Activated B cell treated with CpG ODN at 0.5 μM for 24 hours (primary cell): ENCODE measurements at regions of chr5 and their contacts with region 1.

Region 1: DNA sequence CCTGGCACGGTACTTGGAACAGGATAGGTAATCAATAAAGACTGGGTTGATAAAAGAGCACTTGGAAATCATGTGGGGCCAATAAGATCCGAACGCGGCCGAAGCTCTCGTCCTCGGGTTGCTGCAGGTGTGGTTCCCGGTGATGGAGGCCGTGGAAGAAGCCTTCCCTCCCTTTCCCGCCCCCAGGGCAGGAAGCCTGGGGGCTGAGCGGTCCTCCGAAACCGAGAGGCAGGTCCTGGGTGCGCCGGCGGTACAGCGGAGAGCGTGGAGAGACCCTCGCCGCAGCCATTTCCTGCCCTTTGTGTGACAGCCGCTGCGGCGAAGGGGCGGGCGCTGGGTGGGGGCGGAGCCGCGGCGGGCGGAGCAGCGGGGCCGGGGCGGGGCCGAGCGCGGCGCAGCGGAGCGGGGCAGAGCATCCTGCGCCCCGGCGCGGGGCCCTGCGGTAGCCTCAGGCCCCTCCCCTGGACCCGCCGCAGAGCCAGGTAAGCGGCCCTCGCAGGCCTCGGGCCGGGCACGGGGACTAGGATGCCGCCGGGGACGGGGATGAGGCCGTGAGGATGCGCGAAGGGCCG is at the start of gene CYFIP2:
- DNase-seq: peak; percentile 76
- ATAC-seq: peak; percentile 90
- H3K4me3 Mint-ChIP-seq: peak within 1 kb of the TSS; percentile 97
- H3K27ac Mint-ChIP-seq: peak within 1 kb of the TSS; percentile 99
- H3K4me1 Mint-ChIP-seq: peaks cover 69% of the 10 kb centered on the region
- H3K27me3 Mint-ChIP-seq: no peaks in the 10 kb centered on the region
- CTCF ChIP-seq: no peak
- total RNA-seq, gene CYFIP2: 385 and 471 TPM in 2 replicates

Region 2: GRCh38 chr5:157283434-157283833 is 17.6 kb after region 1 on chr5:
- CTCF ChIA-PET with region 1: interaction called, 4 read pairs
- POLR2A ChIA-PET with region 1: interaction called, 73 read pairs
- intact Hi-C with region 1: loop called (anchors 1 kb)
- DNase-seq: peak; percentile 40
- ATAC-seq: peak; percentile 99
- H3K4me3 Mint-ChIP-seq: peak overlapping the region; percentile 52
- H3K27ac Mint-ChIP-seq: peak overlapping the region; percentile 89
- H3K4me1 Mint-ChIP-seq: peaks cover 70% of the 10 kb centered on the region
- H3K27me3 Mint-ChIP-seq: no peaks in the 10 kb centered on the region
- CTCF ChIP-seq: no peak

Region 3: DNA sequence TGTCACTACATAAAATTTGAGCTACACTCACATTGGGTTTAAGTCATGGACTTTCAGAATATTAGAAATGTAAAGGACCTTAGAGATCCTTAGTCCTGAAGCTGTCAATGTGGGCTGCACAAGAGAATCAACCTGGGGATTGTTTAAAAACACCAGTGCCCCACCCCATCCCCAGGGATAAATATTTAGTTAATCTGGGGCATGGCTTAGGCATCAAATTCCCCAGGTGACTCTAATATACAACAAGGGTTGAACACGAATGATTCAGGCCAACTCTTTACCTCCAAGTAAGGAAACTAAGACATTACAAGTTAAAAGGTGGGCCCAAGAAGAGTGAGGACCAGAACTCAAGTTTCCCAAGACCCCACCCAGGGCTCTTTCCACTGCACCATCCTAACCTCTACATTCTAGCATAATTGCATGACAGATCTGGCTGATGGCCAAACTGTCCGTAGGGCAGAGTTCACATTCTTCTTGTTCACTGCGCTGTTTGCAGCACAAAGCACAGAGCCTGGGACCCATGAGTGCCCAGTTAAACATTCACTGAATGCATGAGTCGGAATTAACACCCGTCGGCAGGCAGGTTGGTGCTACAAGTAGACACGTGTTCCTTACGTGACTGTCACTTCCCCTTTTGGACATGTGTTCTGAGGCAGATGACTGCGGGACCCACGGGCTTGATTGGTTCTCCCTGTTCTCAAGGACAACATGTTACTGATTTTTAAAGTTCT is 25.3 kb after region 1 on chr5:
- CTCF ChIA-PET with region 1: no interaction called
- POLR2A ChIA-PET with region 1: interaction called, 73 read pairs
- intact Hi-C with region 1: loop called (anchors 1 kb)
- DNase-seq: no peak
- ATAC-seq: peak; percentile 94
- H3K4me3 Mint-ChIP-seq: no peak overlapping the region
- H3K27ac Mint-ChIP-seq: peak overlapping the region; percentile 89
- H3K4me1 Mint-ChIP-seq: peaks cover 48% of the 10 kb centered on the region
- H3K27me3 Mint-ChIP-seq: no peaks in the 10 kb centered on the region
- CTCF ChIP-seq: no peak

Region 4: GRCh38 chr5:157306692-157307471 is 41.1 kb after region 1 on chr5:
- CTCF ChIA-PET with region 1: interaction called, 14 read pairs
- POLR2A ChIA-PET with region 1: interaction called, 21 read pairs
- intact Hi-C with region 1: loop called (anchors 1 kb)
- DNase-seq: no peak
- ATAC-seq: peak; percentile 67
- H3K4me3 Mint-ChIP-seq: peak overlapping the region; percentile 65
- H3K27ac Mint-ChIP-seq: peak overlapping the region; percentile 89
- H3K4me1 Mint-ChIP-seq: peaks cover 47% of the 10 kb centered on the region
- H3K27me3 Mint-ChIP-seq: no peaks in the 10 kb centered on the region
- CTCF ChIP-seq: no peak